CD8-positive, alpha-beta T cell (primary cell): ENCODE measurements at regions of chr14 and their contacts with region 1.

Region 1: DNA sequence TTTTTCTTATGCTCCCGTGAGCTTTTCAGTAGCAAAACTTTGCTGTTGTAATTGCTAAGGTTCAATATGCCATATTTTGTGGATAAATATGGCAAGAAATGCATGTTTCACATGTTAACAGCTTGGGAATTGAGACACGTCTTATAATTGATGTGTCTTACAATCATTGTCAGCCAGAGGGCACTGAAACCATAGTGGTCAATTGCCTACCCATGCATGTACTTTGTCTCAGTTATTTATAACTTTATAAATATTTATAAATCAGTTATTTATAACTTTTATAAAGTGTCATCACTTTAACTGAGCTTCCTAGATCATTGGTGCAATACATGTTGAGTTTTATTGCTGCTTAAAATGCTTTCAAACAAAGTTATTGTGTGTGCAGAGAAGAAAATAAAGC is 82.0 kb downstream of the CATSPERB start:
- DNase-seq: peak in 4 of 9 experiments; percentile 20 to 60 (median 36)
- ATAC-seq: peak; percentile 52
- H3K4me3 ChIP-seq: no peak overlapping the region
- H3K4me3 Mint-ChIP-seq: no peak overlapping the region
- H3K27ac ChIP-seq: no peak overlapping the region
- H3K27ac Mint-ChIP-seq: no peak overlapping the region
- H3K4me1 ChIP-seq: no peaks in the 10 kb centered on the region
- H3K4me1 Mint-ChIP-seq: no peaks in the 10 kb centered on the region
- H3K27me3 ChIP-seq: no peaks in the 10 kb centered on the region
- H3K27me3 Mint-ChIP-seq: no peaks in the 10 kb centered on the region
- CTCF ChIP-seq: peak; percentile 64

Region 2: DNA sequence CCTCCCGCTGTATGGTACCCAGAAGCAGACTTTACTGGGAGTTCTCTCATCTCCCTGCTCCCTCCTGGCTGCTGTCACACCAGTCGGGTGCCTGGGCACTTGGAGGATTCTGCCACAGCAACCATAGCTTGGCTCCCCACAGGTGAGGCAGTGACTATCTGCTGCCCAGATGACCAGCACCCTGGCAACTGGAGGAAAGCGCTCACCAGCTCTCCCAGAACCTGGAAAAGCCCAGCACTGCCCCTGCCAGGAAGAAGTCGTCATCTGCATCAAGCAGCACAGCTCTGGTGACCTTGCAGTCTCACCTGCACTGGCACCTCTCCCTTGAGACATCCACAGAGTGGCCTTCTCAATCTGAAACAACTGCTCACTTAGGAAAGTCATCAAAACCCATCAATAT is 249.3 kb after region 1 on chr14:
- CTCF ChIA-PET with region 1: interaction called, 13 read pairs
- POLR2A ChIA-PET with region 1: no interaction called
- intact Hi-C with region 1: no loop called
- DNase-seq: peak in 3 of 9 experiments; percentile 30 to 53 (median 49)
- ATAC-seq: no peak
- H3K4me3 ChIP-seq: no peak overlapping the region
- H3K4me3 Mint-ChIP-seq: no peak overlapping the region
- H3K27ac ChIP-seq: no peak overlapping the region
- H3K27ac Mint-ChIP-seq: no peak overlapping the region
- H3K4me1 ChIP-seq: peaks cover under 1% of the 10 kb centered on the region
- H3K4me1 Mint-ChIP-seq: peaks cover 19% of the 10 kb centered on the region
- H3K27me3 ChIP-seq: no peaks in the 10 kb centered on the region
- H3K27me3 Mint-ChIP-seq: no peaks in the 10 kb centered on the region
- CTCF ChIP-seq: no peak